Esophagus muscularis mucosa (tissue), 4 donors: ENCODE measurements at regions of chr13 and their contacts with region 1.

Region 1: DNA sequence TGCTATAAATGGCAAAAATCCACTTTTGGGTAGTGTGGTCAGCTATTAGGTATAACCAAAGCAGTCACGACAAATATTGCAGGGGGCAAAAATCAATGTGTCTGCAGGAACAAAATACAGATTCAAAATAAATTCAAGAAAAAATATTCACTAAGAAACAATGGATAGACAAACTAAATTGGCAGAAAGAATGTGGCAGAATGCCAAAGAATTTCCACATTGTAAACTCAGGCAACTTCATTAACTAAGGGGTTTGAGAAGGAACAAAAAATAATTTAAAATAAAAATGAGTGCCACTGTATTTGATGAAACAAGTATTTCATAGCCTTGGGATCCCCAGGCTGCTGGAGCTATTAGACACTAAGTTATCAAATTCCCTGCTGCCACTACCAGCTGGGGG is 193.1 kb downstream of the VWA8 start:
- DNase-seq: no peak
- H3K4me3 ChIP-seq: no peak overlapping the region
- H3K27ac ChIP-seq: no peak overlapping the region
- H3K4me1 ChIP-seq: peaks cover 8 to 11% (median 9%) of the 10 kb centered on the region in 4 donors
- H3K27me3 ChIP-seq: no peaks in the 10 kb centered on the region
- CTCF ChIP-seq: no peak
- EP300 ChIP-seq: no peak
- POLR2A ChIP-seq: no peak

Region 2: GRCh38 chr13:41820581-41821237 is 52.9 kb after region 1 on chr13:
- intact Hi-C with region 1: loop called (anchors 5 kb)
- DNase-seq: no peak
- H3K4me3 ChIP-seq: no peak overlapping the region
- H3K27ac ChIP-seq: no peak overlapping the region
- H3K4me1 ChIP-seq: peaks cover 5 to 14% (median 7%) of the 10 kb centered on the region in 4 donors
- H3K27me3 ChIP-seq: no peaks in the 10 kb centered on the region
- CTCF ChIP-seq: no peak
- EP300 ChIP-seq: no peak
- POLR2A ChIP-seq: no peak

Region 3: GRCh38 chr13:41897126-41897525 is 129.3 kb after region 1 on chr13:
- intact Hi-C with region 1: no loop called
- DNase-seq: no peak
- H3K4me3 ChIP-seq: no peak overlapping the region
- H3K27ac ChIP-seq: no peak overlapping the region
- H3K4me1 ChIP-seq: no peaks in the 10 kb centered on the region
- H3K27me3 ChIP-seq: no peaks in the 10 kb centered on the region
- CTCF ChIP-seq: no peak
- EP300 ChIP-seq: no peak
- POLR2A ChIP-seq: no peak